ENCODE measurements at regions of chr1 and their contacts with region 1.

Region 1: DNA sequence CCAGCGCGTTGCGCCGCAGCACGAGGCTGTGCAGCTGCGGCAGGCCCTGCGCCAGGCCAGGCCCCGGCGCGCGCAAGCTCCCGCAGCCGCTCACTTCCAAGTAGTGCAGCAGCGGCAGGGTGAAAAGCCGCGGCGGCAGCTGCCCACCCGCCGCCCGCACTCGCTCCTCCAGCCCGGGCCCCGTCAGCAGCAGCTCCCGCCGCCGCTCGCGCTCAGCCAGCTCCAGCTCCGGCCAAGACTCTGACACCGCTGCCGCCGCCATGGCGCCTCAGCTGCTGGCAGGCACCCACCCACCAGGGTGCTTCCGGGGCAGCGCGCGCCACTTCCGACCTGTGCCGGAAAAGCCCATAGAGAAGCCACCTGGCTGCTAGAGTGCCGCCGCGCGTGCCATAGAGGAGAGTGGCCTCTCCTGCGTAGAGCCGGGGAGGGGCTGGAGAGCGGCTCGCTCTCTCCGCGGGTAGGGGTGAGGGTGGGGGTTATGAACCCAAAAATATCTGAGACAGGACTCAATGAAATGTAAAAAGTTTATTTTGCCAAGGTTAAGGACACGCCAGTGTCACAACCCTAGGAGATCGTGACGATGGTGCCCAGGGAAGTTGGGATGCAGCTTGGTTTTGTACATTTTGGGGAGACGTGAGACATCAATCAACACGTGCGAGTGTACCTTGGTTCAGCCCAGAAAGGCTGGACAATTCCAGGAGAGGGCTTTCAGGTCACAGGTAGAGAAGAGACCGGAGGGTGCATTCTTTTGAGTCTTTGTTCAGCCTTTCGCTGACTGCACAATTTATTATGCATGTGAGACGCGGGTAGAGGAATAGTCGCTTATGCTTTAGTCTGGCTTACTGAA is at the start of gene LRRC47:
- DNase-seq: peak; percentile 89 to 95 (median 92)
- H3K4me3 ChIP-seq: peak within 1 kb of the TSS; percentile 72 to 95 (median 86)
- H3K27ac ChIP-seq: peak within 1 kb of the TSS; percentile 58 to 84
- H3K4me1 ChIP-seq: peaks cover 5 to 33% (median 26%) of the 10 kb centered on the region in 4 experiments
- H3K27me3 ChIP-seq: peaks cover 0 to 4% (median 0%) of the 10 kb centered on the region in 5 experiments

Region 2: DNA sequence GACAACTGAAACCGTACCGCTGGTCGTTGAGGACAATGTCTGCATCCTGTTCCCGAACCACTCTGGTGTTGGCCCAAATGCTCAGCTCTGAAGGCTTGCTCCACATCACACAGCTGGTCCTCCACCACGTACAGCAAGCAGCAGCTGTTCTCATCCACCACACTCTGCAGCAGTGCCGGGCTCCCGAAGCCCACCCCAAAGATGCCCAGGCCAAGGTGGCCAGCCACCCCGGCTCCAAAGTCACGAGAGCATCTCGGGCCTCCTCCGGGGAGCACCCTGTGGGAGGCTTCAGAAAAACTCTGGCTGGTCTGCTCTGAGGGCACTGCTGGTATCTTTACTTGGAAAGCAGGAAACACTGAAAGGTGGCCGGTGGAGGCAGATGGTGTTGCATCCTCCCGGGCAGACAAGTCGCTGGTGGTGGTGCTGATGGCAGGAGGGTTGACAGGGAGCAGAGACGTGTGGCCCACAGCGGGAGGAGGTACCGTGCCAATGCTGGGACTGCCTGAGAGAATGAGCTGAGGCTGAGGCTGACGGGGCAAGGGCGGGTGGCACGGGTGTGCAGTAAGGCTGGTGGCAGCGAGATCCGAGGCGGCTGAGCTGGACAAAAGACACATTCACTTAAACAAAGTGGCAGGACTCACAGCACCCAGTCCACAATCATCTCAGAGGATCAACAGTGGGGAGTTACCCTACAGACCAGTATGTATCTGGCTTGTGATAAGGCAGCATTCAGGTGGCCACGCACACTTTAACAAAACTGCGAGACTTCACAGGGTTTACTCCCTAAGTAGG is 50.7 kb before region 1 on chr1:
- CTCF ChIA-PET with region 1: no interaction called
- POLR2A ChIA-PET with region 1: no interaction called
- DNase-seq: peak in 2 of 3 donors; percentile 13 to 19
- H3K4me3 ChIP-seq: peak overlapping the region in 3 of 7 experiments; percentile 75 to 82 (median 79)
- H3K27ac ChIP-seq: no peak overlapping the region
- H3K4me1 ChIP-seq: peaks cover 0 to 26% (median 18%) of the 10 kb centered on the region in 4 experiments
- H3K27me3 ChIP-seq: no peaks in the 10 kb centered on the region

Region 3: DNA sequence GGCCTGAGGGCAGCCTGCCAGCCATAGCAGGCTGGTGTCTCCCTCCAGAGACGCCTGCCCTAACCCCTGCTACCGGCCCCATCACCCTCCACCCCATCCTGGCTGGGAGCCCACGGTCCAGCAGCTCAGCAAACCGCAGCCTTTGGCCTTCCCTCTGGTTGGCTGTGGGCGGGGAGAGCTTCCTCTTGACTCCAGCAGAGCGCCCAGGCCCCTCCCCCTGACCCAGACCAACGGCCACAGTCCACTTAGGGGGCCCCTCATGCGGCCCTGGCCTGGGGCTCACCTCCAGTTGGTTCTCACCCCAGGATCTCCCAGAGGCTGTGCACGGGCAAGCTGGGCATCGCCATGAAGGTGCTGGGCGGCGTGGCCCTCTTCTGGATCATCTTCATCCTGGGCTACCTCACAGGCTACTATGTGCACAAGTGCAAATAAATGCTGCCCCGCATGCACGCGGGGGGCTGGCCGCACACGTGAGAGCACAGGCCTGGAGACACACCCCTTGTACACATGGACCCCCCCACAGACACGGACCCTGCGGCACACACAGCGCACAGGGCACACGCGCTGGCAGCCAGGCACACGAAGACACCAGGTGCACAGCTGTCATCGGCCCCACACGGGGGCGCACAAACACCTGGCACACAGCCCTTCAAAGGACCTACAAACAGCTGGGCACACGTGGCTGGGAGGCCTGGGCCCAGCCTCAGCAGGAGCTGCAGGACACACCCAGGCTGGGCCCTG is 20.8 kb before region 1 on chr1:
- CTCF ChIA-PET with region 1: interaction called, 18 read pairs
- POLR2A ChIA-PET with region 1: no interaction called
- DNase-seq: peak; percentile 60 to 77 (median 71)
- H3K4me3 ChIP-seq: peak overlapping the region in 3 of 7 experiments; percentile 26 to 36 (median 30)
- H3K27ac ChIP-seq: peak overlapping the region in 1 of 2 experiments; percentile 14
- H3K4me1 ChIP-seq: peaks cover 0 to 46% (median 39%) of the 10 kb centered on the region in 4 experiments
- H3K27me3 ChIP-seq: no peaks in the 10 kb centered on the region

Region 4: GRCh38 chr1:3821004-3821403 is 24.6 kb after region 1 on chr1:
- CTCF ChIA-PET with region 1: no interaction called
- POLR2A ChIA-PET with region 1: no interaction called
- DNase-seq: no peak
- H3K4me3 ChIP-seq: no peak overlapping the region
- H3K27ac ChIP-seq: no peak overlapping the region
- H3K4me1 ChIP-seq: no peaks in the 10 kb centered on the region
- H3K27me3 ChIP-seq: no peaks in the 10 kb centered on the region

Region 5: DNA sequence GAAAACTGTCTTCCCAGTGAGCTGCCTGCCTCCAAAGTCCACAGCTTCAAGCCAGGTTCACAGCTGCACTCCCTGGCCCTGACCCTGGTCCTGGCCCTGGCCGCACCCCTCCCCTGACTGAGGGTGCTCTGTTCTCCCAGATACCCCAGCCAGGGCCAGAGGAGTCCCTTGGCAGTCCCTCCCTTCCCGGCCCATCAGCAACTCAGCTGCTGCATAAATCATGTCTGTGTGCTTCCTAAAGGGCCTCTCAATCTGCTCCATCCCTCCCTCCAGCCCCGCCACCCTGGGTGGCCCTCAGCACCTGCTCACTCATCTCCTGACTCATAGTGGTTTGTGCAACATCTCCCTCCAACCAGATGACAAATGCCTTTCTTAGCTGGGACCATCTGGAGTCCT is 128.4 kb after region 1 on chr1:
- CTCF ChIA-PET with region 1: no interaction called
- POLR2A ChIA-PET with region 1: no interaction called
- DNase-seq: peak in 2 of 3 donors; percentile 28 to 45
- H3K4me3 ChIP-seq: no peak overlapping the region
- H3K27ac ChIP-seq: no peak overlapping the region
- H3K4me1 ChIP-seq: peaks cover 0 to 3% (median 0%) of the 10 kb centered on the region in 4 experiments
- H3K27me3 ChIP-seq: peaks cover 0 to 20% (median 0%) of the 10 kb centered on the region in 5 experiments

Region 6: DNA sequence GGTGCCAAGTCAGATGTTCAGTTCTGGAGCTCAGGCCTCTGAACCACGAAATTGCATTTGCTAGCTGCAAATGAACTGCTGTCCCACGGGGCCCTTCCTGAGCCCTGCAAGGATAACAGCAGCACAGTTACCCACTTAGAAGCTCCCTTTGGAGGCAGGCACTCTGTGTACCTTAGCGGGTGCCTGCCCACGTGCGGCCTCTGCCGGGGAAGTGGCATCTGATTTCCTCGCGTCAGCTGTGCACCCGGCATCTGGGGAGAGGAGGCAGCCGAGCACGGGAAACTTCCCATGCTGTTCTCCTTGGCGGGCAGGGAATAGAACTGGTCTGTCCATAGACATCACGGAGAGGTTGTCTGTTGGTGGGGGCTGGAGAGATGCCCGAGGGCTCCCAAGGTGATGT is 251.6 kb after region 1 on chr1:
- CTCF ChIA-PET with region 1: no interaction called
- POLR2A ChIA-PET with region 1: no interaction called
- DNase-seq: no peak
- H3K4me3 ChIP-seq: no peak overlapping the region
- H3K27ac ChIP-seq: no peak overlapping the region
- H3K4me1 ChIP-seq: no peaks in the 10 kb centered on the region
- H3K27me3 ChIP-seq: peaks cover 0 to 42% (median 2%) of the 10 kb centered on the region in 5 experiments

Measured in common myeloid progenitor, CD34-positive (primary cell).